AG04449 (cell line): ENCODE measurements at regions of chr5 and their contacts with region 1.

Region 1: GRCh38 chr5:173573126-173573960 is 43.1 kb downstream of the BOD1 start:
- DNase-seq: no peak
- H3K4me3 ChIP-seq: peak overlapping the region; percentile 21; the same call in 1 of the 2 replicates
- CTCF ChIP-seq: peak; percentile 99

Region 2: DNA sequence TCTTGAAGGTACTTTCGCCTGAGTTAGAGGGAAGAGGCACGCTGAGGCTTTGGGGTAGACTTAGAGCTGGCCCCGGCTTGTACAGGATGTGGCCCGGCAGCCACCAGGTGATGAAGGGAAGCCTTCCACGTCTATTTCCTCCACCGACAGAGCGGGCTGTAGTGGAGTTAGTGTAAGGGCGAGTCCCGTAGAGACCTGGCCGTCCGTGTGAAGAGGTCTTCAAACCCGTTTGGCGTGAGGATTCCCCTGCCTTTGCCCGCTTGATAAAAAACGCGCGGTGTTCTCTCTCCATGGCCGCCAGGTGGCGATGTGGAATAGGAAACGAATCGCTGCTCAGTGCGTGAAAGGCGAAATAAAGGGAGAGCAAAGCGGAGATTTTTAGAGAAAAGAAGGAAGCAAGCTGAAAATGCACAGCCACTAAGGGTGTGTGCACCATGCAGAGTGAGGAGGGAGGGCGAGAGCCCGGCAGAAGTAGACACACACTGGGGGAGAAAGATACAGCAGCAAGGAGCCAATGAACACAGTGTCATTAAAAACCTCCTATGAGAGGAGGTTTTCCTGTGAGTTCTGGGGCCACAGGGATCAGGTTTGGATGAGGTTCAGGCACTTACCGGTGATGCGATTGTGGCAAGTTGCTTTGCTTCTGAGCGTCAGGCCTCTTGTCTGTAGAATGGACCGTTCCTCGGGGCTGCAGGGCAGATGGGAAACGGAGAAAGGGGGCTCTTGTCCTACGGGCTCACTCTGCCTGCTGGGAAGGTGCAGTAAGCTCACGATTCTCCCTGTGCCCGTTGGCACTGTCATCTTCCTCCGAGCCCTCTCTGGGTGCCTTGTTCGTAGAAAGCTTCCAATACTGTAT is 279.3 kb before region 1 on chr5:
- CTCF ChIA-PET with region 1: interaction called, 137 read pairs
- POLR2A ChIA-PET with region 1: no interaction called
- DNase-seq: peak; percentile 19
- H3K4me3 ChIP-seq: peak overlapping the region; percentile 39
- CTCF ChIP-seq: peak; percentile 80

Region 3: GRCh38 chr5:173315495-173316350 is 257.6 kb before region 1 on chr5:
- CTCF ChIA-PET with region 1: interaction called, 29 read pairs
- POLR2A ChIA-PET with region 1: interaction called, 3 read pairs
- DNase-seq: no peak
- H3K4me3 ChIP-seq: no peak overlapping the region; the same call in 1 of the 2 replicates
- CTCF ChIP-seq: no peak

Region 4: GRCh38 chr5:173396311-173396993 is 176.9 kb before region 1 on chr5:
- CTCF ChIA-PET with region 1: interaction called, 34 read pairs
- POLR2A ChIA-PET with region 1: no interaction called
- DNase-seq: no peak
- H3K4me3 ChIP-seq: no peak overlapping the region
- CTCF ChIP-seq: no peak

Region 5: GRCh38 chr5:173531863-173532262 is 41.5 kb before region 1 on chr5:
- CTCF ChIA-PET with region 1: interaction called, 10 read pairs
- POLR2A ChIA-PET with region 1: no interaction called
- DNase-seq: no peak
- H3K4me3 ChIP-seq: no peak overlapping the region
- CTCF ChIP-seq: no peak

Region 6: GRCh38 chr5:173563252-173563651 is 10.1 kb before region 1 on chr5:
- CTCF ChIA-PET with region 1: interaction called, 92 read pairs
- POLR2A ChIA-PET with region 1: no interaction called
- DNase-seq: no peak
- H3K4me3 ChIP-seq: no peak overlapping the region
- CTCF ChIP-seq: no peak

Region 7: GRCh38 chr5:173714551-173715428 is 141.4 kb after region 1 on chr5:
- CTCF ChIA-PET with region 1: no interaction called
- POLR2A ChIA-PET with region 1: no interaction called
- DNase-seq: peak; percentile 42
- H3K4me3 ChIP-seq: no peak overlapping the region
- CTCF ChIP-seq: no peak